Ascending aorta (tissue), 2 donors: ENCODE measurements at regions of chr6 and their contacts with region 1.

Region 1: DNA sequence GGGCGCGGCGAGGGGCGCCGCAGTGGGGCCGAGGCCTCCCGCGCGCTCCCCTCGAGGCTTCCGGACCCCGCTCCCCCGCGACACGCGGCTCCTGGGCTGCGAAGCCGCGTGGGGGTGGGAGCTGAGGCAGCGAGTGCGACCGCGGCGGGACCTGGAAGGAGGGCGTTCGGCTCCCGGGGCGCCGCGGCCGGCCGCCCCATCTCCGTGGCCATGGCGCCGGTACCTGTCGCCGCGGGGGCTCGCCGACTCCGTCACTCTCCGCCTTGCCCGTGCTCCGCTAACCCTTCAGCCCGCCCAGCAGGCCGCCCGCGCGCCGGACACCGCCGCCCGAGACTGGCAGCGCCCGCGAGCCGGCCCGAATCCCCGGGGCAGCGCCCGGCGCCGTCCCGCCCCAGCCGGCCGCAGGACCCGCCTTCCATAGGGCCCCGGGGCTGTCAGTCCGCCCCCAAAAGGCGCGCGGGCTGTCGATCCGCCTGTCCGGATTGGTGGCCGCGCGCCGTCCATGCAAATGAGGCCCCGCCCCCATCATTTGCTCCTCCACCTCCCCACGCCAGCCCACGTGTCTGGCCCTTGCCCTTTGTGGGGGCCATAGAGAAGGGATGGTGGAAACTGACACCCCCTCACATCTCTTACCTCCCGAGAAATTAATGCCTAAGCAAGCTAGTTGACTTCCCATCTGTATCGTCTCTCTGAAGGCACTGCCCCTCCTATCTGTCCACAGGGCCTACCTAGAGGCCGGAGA is at the start of gene FKBP5:
- DNase-seq: peak; percentile 85 to 98
- H3K4me3 ChIP-seq: peak within 1 kb of the TSS; percentile 98 to 99
- H3K27ac ChIP-seq: peak within 1 kb of the TSS; percentile 96 to 98
- H3K4me1 ChIP-seq: peaks cover 13 to 21% of the 10 kb centered on the region in 2 donors
- H3K27me3 ChIP-seq: no peaks in the 10 kb centered on the region
- CTCF ChIP-seq: no peak
- total RNA-seq, gene FKBP5: 112 TPM

Region 2: DNA sequence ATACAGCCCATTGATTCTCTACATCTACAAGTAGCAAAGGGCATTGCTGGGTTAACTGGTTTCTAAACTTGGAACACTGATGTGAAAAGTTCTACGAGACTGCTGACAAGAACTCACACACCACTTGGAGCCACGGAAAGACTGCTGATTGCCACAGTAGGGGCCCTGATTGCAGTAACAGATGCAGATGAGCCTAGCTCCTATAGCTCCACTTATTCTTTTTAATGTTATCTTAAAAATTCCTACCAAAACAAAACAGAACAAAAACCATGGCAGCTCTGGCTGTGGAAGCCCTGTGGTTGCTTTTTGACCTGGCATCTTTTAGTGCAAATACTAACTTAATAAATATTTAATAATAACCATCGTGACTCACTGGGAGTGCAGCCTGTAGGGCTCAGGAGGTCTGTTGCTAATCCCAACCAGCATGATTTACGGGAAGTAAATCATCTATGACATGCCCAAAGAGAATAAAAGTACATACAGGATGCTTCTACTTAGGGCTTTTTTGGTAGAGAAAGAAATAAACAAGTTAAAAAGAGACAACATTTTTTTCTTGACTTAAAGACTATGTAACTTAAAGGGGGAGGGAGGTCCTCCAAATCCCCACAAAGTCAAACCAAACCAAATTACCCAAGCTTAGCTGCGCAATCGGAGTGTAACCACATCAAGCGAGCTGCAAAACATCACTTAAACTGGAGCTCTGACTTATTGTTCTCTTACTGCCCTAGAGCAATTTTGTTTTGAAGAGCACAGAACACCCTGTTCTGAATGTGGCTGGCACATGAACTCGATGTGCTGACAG is 87.2 kb before region 1 on chr6:
- intact Hi-C with region 1: loop called (anchors 5 kb)
- DNase-seq: peak; percentile 45 to 88
- H3K4me3 ChIP-seq: peak overlapping the region; percentile 41 to 51
- H3K27ac ChIP-seq: peak overlapping the region; percentile 95 to 97
- H3K4me1 ChIP-seq: peaks cover 24 to 78% of the 10 kb centered on the region in 2 donors
- H3K27me3 ChIP-seq: no peaks in the 10 kb centered on the region
- CTCF ChIP-seq: no peak

Region 3: DNA sequence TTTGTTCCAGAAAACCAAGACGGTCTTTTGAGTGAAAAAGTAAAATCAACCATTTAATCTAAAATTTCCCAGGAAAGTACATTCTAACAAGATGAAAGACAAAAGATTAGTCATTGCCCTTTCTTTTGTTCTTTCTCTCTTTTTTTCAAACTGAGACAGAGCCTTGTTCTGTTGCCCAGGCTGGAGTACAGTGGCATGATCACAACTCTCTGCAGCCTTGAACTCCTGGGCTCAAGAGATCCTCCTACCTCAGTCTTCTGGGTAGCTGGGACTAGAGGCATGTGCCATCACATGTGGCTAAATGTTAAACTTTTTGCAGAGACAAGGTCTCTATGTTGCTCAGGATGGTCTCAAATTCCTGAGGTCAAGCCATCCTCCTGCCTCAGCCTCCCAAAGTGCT is 75.0 kb before region 1 on chr6:
- intact Hi-C with region 1: no loop called
- DNase-seq: no peak
- H3K4me3 ChIP-seq: no peak overlapping the region
- H3K27ac ChIP-seq: no peak overlapping the region
- H3K4me1 ChIP-seq: no peaks in the 10 kb centered on the region
- H3K27me3 ChIP-seq: no peaks in the 10 kb centered on the region
- CTCF ChIP-seq: no peak

Region 4: DNA sequence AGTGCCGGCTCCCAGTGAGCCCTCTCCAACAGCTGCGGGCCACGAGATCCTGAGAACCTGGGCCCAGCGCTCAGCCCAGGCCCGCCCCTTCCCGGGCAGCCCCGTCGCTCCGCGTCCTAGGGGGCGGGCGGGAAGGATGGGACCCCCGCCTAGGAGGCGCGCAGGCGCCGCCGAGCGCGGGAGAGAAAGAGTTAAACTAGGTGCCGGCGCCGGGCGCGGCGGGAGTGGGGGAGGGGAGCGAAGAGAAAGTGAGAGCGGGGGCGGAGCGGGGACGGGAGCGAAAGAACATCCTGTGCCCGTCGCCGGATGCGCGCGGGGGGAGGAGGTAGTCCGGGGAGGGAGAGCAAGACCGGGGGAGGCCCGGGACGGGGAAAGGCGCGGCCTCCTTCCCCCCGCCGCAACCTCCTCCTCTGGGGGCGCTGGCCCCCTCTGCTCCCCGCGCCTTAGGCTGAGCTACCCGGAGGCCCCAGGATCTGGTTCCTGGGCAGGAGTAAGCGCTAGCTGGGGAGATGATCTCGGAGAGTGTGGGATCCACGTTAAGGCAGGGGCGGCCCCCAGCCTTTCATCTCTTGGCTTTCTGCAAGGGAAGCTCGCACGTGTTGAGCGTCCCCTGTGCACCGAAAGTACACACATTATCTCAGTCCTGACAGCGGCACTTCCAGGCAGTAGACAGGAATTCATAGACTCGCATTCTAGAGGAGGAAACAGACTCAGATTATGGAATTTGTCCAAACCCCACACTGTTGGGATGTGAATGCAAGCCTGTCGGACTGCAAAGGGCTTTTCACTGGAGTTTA is 43.2 kb after region 1 on chr6:
- intact Hi-C with region 1: loop called (anchors 1 kb)
- DNase-seq: peak; percentile 86 to 98
- H3K4me3 ChIP-seq: peak overlapping the region; percentile 59 to 84
- H3K27ac ChIP-seq: peak overlapping the region; percentile 100
- H3K4me1 ChIP-seq: peaks cover 47 to 67% of the 10 kb centered on the region in 2 donors
- H3K27me3 ChIP-seq: no peaks in the 10 kb centered on the region
- CTCF ChIP-seq: no peak

Region 5: GRCh38 chr6:35737413-35738211 is 48.9 kb after region 1 on chr6:
- intact Hi-C with region 1: loop called (anchors 1 kb)
- DNase-seq: no peak
- H3K4me3 ChIP-seq: no peak overlapping the region
- H3K27ac ChIP-seq: no peak overlapping the region
- H3K4me1 ChIP-seq: peaks cover 5 to 23% of the 10 kb centered on the region in 2 donors
- H3K27me3 ChIP-seq: no peaks in the 10 kb centered on the region
- CTCF ChIP-seq: peak; percentile 78 to 96 (median 84)